Activated CD4-positive, alpha-beta memory T cell treated with anti-CD3 and anti-CD28 coated beads, Interleukin-2, amount 10 ng/mL, durations not matched to agents 7 days and 5 days (primary cell): ENCODE measurements at regions of chr1 and their contacts with region 1.

Region 1: GRCh38 chr1:26500488-26501175 is 28.4 kb downstream of the HMGN2 start:
- DNase-seq: no peak
- H3K4me3 Mint-ChIP-seq: peak overlapping the region; percentile 87
- H3K27ac Mint-ChIP-seq: peak overlapping the region; percentile 93
- H3K4me1 Mint-ChIP-seq: peaks cover 28% of the 10 kb centered on the region
- H3K27me3 Mint-ChIP-seq: no peaks in the 10 kb centered on the region

Region 2: DNA sequence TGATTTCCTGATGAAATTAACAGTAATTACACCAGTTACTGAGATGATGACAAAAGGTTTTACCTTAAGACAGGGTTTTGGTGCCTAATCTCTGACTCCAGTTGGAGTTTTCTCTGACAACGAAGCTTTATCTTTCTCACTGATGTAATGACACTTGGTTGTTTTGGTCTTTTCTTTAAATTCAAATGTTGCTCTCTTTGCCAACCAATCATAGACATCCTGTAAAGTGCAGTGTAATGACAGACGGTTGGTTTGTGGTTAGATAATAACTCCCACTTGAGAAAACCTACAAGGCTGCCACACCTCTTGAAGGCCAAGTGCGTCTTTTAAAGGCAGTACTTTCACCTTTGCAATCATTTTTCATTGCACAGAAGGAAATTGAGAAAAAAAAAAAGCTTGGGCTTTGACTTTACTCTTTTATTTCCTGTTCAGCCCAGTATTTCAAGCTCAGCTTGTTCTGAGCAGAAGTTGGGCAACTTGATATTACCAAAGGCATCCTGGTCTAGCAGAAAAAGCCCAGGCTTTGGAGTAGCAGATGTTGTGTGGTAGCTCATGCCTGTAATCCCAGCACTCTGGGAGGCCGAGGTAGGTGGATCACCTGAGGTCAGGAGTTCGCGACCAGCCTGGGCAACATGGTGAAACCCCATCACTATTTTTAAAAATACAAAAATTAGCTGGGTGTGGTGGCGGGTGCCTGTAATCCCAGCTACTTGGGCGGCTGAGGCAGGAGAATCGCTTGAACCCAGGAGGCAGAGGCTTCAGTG is 374.1 kb before region 1 on chr1:
- CTCF ChIA-PET with region 1: no interaction called
- POLR2A ChIA-PET with region 1: interaction called, 10 read pairs
- DNase-seq: peak; percentile 69
- H3K4me3 Mint-ChIP-seq: peak overlapping the region; percentile 73
- H3K27ac Mint-ChIP-seq: peak overlapping the region; percentile 81
- H3K4me1 Mint-ChIP-seq: peaks cover 74% of the 10 kb centered on the region
- H3K27me3 Mint-ChIP-seq: peaks cover 3% of the 10 kb centered on the region

Region 3: GRCh38 chr1:26363549-26364448 is 136.8 kb before region 1 on chr1:
- CTCF ChIA-PET with region 1: no interaction called
- POLR2A ChIA-PET with region 1: no interaction called
- DNase-seq: peak; percentile 88
- H3K4me3 Mint-ChIP-seq: no peak overlapping the region
- H3K27ac Mint-ChIP-seq: no peak overlapping the region
- H3K4me1 Mint-ChIP-seq: peaks cover 49% of the 10 kb centered on the region
- H3K27me3 Mint-ChIP-seq: peaks cover 23% of the 10 kb centered on the region

Region 4: DNA sequence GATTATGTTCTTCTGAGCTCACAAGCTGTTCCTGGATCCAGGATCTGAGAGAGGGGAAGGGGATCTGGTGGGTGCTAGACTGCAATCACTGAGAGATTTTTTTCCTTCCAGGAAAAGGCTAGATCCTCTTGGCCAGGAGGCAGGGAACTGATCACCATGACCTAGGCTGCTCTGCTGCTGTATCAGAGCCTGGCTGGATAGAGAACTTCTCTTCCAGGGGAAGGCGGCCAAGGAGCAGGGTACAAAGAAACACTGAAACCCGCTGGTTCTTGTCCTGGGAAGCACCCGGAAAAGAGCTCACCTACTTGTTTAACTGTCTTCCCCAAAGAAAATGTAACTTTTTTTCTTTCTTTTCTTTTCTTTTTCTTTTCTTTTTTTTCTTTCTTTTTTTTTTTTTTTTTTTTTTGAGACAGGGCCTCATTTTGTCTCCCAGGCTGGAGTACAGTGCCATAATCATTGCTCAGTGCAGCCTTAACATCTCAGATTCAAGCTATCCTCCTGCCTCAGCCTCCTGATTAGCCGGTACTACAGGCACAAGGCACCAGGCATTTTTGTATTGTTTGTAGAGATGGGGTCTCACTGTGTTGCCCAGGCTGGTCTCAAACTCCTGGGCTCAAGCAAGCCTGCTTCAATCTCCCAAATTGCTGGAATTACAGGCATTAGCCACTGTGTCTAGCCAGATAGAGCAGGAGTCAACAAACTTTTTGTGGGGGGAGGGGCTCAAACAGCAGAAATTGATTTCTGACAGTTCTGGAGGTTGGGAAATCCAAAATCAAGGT is 16.5 kb after region 1 on chr1:
- CTCF ChIA-PET with region 1: interaction called, 5 read pairs
- POLR2A ChIA-PET with region 1: interaction called, 11 read pairs
- DNase-seq: no peak
- H3K4me3 Mint-ChIP-seq: no peak overlapping the region
- H3K27ac Mint-ChIP-seq: no peak overlapping the region
- H3K4me1 Mint-ChIP-seq: no peaks in the 10 kb centered on the region
- H3K27me3 Mint-ChIP-seq: peaks cover 15% of the 10 kb centered on the region

Region 5: GRCh38 chr1:26541816-26542711 is 41.4 kb after region 1 on chr1:
- CTCF ChIA-PET with region 1: interaction called, 89 read pairs
- POLR2A ChIA-PET with region 1: interaction called, 88 read pairs
- DNase-seq: peak; percentile 89
- H3K4me3 Mint-ChIP-seq: peak overlapping the region; percentile 74
- H3K27ac Mint-ChIP-seq: peak overlapping the region; percentile 96
- H3K4me1 Mint-ChIP-seq: peaks cover 93% of the 10 kb centered on the region
- H3K27me3 Mint-ChIP-seq: no peaks in the 10 kb centered on the region

Region 6: GRCh38 chr1:26695356-26696118 is 194.9 kb after region 1 on chr1 and contains the start of gene ARID1A:
- CTCF ChIA-PET with region 1: interaction called, 3 read pairs
- POLR2A ChIA-PET with region 1: interaction called, 24 read pairs
- DNase-seq: peak; percentile 98
- H3K4me3 Mint-ChIP-seq: peak within 1 kb of the TSS; percentile 85
- H3K27ac Mint-ChIP-seq: peak within 1 kb of the TSS; percentile 94
- H3K4me1 Mint-ChIP-seq: peaks cover 32% of the 10 kb centered on the region
- H3K27me3 Mint-ChIP-seq: no peaks in the 10 kb centered on the region
- total RNA-seq, gene ARID1A: 88.9 to 90.0 TPM

Region 7: DNA sequence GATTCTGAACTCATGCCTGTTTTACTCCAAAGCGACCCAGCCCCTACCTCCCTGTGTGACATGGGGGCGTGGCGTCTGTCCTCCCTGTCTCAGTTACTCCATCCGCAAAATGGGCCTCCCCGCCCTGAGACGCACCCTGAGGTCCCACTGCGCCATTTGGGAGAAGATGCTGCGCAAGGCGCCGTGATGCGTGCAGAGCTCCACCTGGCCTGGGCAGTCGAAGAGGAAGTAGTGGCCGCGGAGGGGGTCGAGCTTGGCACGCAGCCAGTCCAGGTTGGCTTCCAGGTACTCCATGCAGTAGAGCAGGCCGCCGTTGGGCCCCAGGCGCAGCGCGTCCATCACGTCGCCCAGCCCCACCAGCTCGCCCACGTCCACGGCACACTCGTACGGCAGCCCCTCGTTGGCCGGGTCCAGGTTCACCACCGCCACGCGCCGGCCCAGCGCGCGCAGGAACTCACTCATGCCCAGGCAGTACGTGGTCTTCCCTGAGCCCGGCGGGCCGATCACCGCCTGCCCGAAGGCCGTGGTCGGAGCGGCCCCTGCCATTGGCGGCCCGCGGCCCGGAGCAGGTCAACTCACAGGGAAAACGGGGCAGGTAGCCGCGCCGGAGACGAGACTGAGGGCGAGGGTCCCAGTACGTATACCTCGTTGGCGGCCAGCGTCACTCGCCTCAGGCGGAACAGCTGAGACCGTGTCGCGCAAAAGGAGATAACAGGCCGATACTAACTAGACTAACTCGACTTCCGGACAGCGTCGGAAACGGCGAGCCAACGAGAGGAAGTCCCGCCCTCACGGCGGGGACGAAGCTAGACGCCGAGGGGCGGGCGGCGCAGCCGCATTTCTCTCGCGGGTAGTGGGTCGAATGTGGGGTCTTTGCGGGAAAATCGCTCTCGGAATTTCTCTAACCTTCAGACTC is 389.2 kb after region 1 on chr1 and contains the start of gene GPN2:
- CTCF ChIA-PET with region 1: interaction called, 7 read pairs
- POLR2A ChIA-PET with region 1: interaction called, 14 read pairs
- DNase-seq: peak; percentile 82
- H3K4me3 Mint-ChIP-seq: peak within 1 kb of the TSS; percentile 99
- H3K27ac Mint-ChIP-seq: peak within 1 kb of the TSS; percentile 94
- H3K4me1 Mint-ChIP-seq: peaks cover 28% of the 10 kb centered on the region
- H3K27me3 Mint-ChIP-seq: no peaks in the 10 kb centered on the region
- total RNA-seq, gene GPN2: 29.4 to 31.4 TPM